A673 (cell line): ENCODE measurements at regions of chr5 and their contacts with region 1.

Region 1: DNA sequence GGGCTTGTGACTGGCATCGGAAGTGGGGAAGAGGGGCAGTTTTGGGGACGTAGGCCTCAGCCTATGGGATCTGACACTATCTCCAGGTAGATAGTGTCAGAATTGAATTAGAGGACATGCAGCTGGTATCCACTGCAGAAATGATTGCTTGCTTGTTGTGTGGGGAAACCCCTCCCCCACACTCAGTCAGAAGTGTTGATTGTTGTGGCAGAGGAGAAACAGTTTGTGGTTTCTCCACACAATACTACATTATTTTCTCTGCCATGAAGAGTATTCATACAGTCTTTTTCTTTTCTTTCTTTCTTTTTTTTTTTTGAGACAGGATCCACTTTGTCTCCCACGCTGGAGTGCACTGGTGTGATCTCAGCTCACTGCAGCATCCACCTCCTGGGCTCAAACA is 113.9 kb downstream of the ARRDC3 start:
- DNase-seq: no peak
- H3K4me3 ChIP-seq: no peak overlapping the region
- H3K27ac ChIP-seq: no peak overlapping the region
- H3K4me1 ChIP-seq: no peaks in the 10 kb centered on the region
- H3K27me3 ChIP-seq: no peaks in the 10 kb centered on the region
- CTCF ChIP-seq: no peak

Region 2: GRCh38 chr5:91875196-91875779 is 606.1 kb after region 1 on chr5:
- CTCF ChIA-PET with region 1: no interaction called
- POLR2A ChIA-PET with region 1: interaction called, 11 read pairs
- intact Hi-C with region 1: no loop called
- DNase-seq: no peak
- H3K4me3 ChIP-seq: no peak overlapping the region
- H3K27ac ChIP-seq: no peak overlapping the region
- H3K4me1 ChIP-seq: no peaks in the 10 kb centered on the region
- H3K27me3 ChIP-seq: no peaks in the 10 kb centered on the region
- CTCF ChIP-seq: no peak